ENCODE measurements at regions of chr9 and their contacts with region 1.

Region 1: GRCh38 chr9:99118782-99119466 is 14.0 kb downstream of the TGFBR1 start:
- DNase-seq: peak; percentile 49
- H3K4me3 Mint-ChIP-seq: peak overlapping the region; percentile 66
- H3K27ac Mint-ChIP-seq: peak overlapping the region; percentile 77
- H3K4me1 Mint-ChIP-seq: peaks cover 59% of the 10 kb centered on the region
- H3K27me3 Mint-ChIP-seq: no peaks in the 10 kb centered on the region

Region 2: DNA sequence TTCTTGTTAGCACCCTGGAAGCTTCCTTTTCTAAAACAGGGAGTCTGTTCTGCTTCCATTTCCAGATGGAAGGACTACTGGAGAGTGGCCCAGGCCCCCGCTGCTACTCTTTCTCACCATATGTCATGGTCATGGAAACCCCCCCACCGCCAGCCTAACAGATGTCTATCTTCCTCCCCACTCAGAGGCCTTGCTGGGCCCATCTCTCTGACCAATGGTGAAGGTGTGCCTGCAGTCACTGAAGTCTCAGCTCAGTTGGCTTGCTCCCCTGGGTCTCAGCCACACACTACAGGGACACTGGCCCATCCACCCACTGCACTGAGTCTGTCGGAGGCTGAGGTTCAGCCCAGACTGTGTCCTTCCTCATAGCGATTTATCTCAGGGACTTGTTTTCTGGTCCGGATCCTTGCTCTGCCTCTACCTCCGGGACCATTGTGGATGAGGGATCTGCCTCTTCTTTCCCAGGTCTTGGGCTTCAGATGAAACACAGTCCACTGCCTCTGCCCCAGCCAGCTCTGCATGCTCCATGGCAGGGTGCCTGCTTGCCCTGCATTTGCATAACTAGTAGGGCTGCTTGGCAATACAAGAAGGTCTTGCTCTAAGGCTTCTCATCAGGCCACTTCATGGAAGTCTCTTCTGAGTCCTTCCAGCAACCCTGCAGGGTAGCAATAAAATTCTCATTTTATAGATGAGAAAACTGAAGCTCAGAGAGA is 280.6 kb before region 1 on chr9:
- intact Hi-C with region 1: no loop called
- DNase-seq: no peak
- H3K4me3 Mint-ChIP-seq: no peak overlapping the region
- H3K27ac Mint-ChIP-seq: no peak overlapping the region
- H3K4me1 Mint-ChIP-seq: no peaks in the 10 kb centered on the region
- H3K27me3 Mint-ChIP-seq: no peaks in the 10 kb centered on the region

Region 3: DNA sequence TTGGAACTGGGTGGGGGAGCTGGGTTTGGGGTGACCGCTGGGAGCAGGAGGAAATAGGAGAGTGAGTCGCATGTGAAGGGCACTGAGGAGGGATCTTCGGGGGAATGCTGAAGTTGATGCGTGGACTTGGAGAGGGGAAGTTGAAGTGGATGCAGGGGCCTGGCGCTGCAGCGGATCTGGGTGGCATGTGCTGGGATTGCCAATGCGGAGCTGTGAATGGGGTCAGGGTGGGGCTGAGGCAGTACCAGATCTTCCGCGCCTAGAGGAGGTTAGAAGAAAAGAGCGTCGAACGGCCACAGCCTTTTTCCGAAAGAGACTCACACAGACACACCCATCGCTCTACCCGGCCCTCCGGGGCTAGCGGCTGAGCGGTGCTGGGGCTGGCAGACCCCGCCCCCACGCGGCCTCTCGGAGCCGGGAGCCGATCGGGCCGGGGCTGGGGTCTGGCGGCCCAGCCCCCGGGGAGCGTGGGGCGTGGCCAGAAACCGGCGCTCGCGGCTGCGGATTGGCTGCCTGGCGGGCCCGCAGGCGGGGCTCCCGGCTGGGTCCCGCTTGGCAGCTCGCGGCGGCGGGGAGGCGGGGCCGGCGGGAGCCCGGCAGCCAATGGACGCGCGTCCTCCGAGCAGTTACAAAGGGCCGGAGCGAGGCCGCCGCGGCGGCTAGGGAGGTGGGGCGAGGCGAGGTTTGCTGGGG is 14.3 kb before region 1 on chr9 and contains the start of gene TGFBR1:
- intact Hi-C with region 1: loop called (anchors 1 kb)
- DNase-seq: peak; percentile 96
- H3K4me3 Mint-ChIP-seq: peak within 1 kb of the TSS; percentile 90
- H3K27ac Mint-ChIP-seq: peak within 1 kb of the TSS; percentile 88
- H3K4me1 Mint-ChIP-seq: peaks cover 50% of the 10 kb centered on the region
- H3K27me3 Mint-ChIP-seq: no peaks in the 10 kb centered on the region
- total RNA-seq, gene TGFBR1: 30.6 and 30.8 TPM in 2 replicates

Region 4: DNA sequence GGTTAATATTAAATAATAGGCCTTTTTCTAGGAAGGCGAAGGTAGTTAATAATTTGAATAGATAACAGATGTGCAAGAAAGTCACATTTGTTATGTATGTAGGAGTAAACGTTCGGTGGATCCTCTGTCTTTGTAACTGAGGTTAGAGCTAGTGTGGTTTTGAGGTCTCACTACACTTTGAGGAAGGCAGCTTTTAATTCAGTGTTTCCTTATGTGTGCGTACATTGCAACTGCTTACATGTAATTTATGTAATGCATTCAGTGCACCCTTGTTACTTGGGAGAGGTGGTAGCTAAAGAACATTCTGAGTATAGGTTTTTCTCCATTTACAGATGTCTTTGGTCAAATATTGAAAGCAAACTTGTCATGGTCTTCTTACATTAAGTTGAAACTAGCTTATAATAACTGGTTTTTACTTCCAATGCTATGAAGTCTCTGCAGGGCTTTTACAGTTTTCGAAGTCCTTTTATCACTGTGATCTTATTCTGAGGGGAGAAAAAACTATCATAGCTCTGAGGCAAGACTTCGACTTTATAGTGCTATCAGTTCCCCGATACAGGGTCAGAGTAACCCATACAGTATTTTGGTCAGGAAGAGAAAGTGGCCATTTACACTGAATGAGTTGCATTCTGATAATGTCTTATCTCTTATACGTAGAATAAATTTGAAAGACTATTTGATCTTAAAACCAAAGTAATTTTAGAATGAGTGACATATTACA is 31.7 kb after region 1 on chr9:
- intact Hi-C with region 1: loop called (anchors 5 kb)
- DNase-seq: no peak
- H3K4me3 Mint-ChIP-seq: no peak overlapping the region
- H3K27ac Mint-ChIP-seq: no peak overlapping the region
- H3K4me1 Mint-ChIP-seq: peaks cover 27% of the 10 kb centered on the region
- H3K27me3 Mint-ChIP-seq: peaks cover 6% of the 10 kb centered on the region

Region 5: GRCh38 chr9:99162759-99163364 is 43.9 kb after region 1 on chr9:
- intact Hi-C with region 1: no loop called
- DNase-seq: no peak
- H3K4me3 Mint-ChIP-seq: no peak overlapping the region
- H3K27ac Mint-ChIP-seq: no peak overlapping the region
- H3K4me1 Mint-ChIP-seq: peaks cover 31% of the 10 kb centered on the region
- H3K27me3 Mint-ChIP-seq: peaks cover 18% of the 10 kb centered on the region

Region 6: DNA sequence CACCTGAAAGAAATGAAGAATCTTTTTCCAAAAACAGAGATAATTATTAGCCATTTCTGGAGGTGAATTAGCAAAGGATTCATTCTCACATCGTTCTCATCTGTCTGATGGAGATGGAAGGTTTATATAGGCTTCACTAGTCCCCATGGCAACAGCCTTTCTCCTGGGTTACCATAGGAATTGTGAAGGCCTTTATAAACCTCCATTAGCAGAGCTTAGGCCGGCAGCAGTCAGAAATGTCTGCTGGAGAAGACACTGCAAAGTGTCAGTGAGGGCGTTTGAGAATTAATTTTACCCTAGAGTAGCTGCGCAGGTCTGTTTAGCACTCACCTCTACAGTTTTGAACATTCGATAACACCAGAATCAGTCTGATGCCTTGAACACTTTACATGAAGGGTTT is 412.4 kb after region 1 on chr9:
- intact Hi-C with region 1: no loop called
- DNase-seq: no peak
- H3K4me3 Mint-ChIP-seq: no peak overlapping the region
- H3K27ac Mint-ChIP-seq: no peak overlapping the region
- H3K4me1 Mint-ChIP-seq: peaks cover 8% of the 10 kb centered on the region
- H3K27me3 Mint-ChIP-seq: peaks cover 14% of the 10 kb centered on the region